ENCODE measurements at regions of chr18 and their contacts with region 1.

Region 1: DNA sequence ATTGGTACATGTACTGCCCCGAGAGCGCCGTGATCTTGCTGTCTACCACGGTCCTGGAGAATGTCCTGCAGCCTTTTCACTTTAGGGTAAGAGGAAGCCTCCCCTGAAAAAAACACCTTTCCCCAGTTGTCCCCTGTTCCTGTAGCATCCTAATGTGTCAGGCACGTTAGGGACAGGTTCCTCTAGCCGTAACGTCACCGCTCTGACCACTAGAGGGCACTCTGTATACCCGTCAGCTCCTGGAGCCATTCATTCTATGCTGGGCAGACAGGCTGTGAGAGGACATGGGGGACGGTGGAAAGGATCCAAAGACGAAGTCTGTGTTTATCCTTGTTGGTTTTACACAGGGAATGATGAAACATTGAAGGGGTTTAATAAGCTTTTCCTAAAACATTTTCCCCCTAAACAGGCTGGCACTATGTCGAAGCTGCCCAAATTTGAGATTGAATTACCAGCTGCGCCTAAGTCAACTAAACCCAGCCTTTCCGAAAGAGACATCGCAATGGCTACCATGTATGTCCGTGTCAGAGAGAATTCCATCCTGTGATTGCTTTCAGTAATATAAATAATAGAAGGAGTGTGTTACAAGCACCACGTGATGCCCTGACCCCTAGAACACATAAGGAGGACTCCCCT is 12.7 kb downstream of the RMC1 start:
- DNase-seq: peak; percentile 46
- H3K4me3 ChIP-seq: no peak overlapping the region
- H3K27ac ChIP-seq: no peak overlapping the region
- H3K27me3 ChIP-seq: no peaks in the 10 kb centered on the region
- CTCF ChIP-seq: peak; percentile 93

Region 2: GRCh38 chr18:23424616-23425015 is 91.4 kb before region 1 on chr18:
- CTCF ChIA-PET with region 1: no interaction called
- POLR2A ChIA-PET with region 1: no interaction called
- DNase-seq: no peak
- H3K4me3 ChIP-seq: no peak overlapping the region
- H3K27ac ChIP-seq: no peak overlapping the region
- H3K27me3 ChIP-seq: no peaks in the 10 kb centered on the region
- CTCF ChIP-seq: no peak

Region 3: GRCh38 chr18:23504720-23505119 is 11.3 kb before region 1 on chr18:
- CTCF ChIA-PET with region 1: interaction called, 18 read pairs
- POLR2A ChIA-PET with region 1: interaction called, 4 read pairs
- DNase-seq: no peak
- H3K4me3 ChIP-seq: peak overlapping the region; percentile 83; the same call in 1 of the 2 replicates
- H3K27ac ChIP-seq: no peak overlapping the region
- H3K27me3 ChIP-seq: no peaks in the 10 kb centered on the region
- CTCF ChIP-seq: no peak

Region 4: DNA sequence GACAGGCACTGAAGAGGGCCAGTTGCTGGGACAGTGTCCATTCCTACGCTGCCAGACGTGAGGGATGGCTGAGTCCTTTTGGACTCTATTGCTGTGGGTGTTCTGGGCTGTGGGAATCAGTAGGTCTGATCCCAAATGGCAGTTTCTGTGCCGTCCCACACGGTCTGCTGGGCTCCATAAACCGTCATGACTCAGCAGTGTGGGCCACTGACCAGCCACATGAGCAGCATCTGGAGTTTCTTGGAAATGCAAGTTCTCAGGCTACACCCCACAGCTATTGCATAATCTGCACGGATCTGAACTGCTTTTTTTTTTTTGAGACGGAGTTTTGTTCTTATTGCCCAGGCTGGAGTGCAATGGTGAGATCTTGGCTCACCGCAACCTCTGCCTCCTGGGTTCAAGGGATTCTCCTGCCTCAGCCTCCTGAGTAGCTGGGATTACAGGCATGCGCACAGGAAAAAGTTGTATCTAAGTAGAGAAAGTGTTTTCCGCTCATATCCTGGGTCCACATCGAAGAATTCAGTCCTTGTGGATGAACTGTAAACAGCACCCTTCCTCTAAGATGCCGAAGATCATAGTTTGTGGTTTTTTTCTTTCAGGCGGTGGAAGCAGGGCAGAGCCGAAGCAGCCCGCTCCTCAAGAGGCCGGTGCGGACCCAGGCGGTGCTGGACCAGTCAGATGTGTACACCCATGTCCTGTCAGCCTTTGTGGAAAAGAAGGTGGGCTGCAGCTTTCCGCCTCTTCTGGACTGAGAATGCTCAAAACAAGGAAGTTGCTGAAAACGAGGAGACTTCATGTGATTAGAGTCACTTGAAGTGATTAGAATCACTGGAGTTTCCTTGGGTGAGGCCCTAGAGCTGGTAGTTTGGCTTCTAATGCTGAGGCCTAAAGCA is 12.8 kb after region 1 on chr18:
- CTCF ChIA-PET with region 1: interaction called, 28 read pairs
- POLR2A ChIA-PET with region 1: interaction called, 3 read pairs
- DNase-seq: no peak
- H3K4me3 ChIP-seq: no peak overlapping the region
- H3K27ac ChIP-seq: no peak overlapping the region
- H3K27me3 ChIP-seq: no peaks in the 10 kb centered on the region
- CTCF ChIP-seq: no peak

Region 5: DNA sequence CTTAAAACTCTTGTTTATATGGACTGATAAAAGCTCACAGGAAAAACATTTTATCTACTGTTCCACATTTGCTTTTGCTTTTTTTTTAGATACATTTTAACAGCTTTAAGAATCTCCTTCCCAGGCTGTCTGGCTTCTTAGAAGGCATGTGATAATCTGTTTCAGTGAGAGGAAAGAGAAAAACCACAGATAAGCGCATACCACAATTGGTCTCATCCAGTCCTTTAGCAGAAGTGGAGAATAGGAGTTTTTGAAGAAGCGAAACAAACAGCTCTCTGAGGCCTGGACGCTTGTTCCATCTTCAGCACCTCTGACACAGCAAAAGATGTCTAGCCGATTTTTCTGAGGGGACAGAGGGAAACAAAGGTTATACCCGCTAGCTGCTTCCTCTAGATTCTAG is 24.8 kb after region 1 on chr18:
- CTCF ChIA-PET with region 1: interaction called, 10 read pairs
- POLR2A ChIA-PET with region 1: no interaction called
- DNase-seq: no peak
- H3K4me3 ChIP-seq: no peak overlapping the region
- H3K27ac ChIP-seq: no peak overlapping the region
- H3K27me3 ChIP-seq: no peaks in the 10 kb centered on the region
- CTCF ChIP-seq: no peak

Region 6: DNA sequence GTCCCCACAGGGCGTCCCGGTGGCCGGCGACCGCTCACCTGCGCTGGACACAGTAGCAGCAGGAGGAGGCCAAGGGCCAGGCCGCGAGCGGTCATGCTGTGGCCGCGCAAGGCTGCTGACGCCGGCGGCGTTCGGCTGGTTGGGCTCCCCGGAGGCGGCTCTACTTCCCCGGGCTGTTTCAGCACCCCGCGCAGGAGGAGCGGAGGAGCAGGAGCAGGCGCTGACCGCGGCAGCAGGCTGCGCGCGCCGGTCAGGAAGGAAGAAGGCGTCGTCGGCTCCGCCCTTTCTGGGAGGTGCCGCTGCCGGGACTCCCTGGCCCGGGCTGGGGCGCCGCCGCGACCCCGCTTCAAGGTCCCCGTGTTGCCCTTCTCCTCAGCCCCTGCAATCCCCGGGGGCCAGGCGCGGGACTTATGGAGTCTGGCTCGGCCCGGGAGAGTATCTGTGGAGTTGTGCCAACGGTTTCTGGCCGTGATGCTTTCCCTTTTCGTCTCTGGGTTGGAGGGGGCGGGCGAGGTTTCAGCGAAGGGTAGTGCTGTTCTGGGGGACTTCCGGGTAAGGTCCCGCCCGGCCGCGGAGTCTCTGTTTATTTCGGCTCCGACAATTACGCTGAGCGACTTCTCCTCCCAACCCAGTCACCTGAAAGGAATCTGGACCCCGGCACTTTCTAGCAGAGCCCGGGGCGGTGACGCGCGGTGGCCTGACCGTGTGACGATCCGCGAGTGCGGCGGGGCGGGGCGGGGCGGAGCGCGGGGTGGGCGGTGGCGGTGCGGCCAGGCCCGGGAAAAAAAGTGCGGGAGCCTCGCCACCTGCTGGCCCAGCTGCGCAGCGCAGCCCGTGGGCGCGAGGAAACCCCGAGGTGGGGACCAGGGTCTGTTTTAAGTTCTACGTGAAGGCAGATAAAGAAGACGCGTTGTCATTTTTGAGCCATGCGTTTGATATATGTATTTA is 70.5 kb after region 1 on chr18 and contains the start of gene NPC1:
- CTCF ChIA-PET with region 1: interaction called, 13 read pairs
- POLR2A ChIA-PET with region 1: no interaction called
- DNase-seq: peak; percentile 81
- H3K4me3 ChIP-seq: peak within 1 kb of the TSS; percentile 90
- H3K27ac ChIP-seq: peak within 1 kb of the TSS; percentile 98
- H3K27me3 ChIP-seq: peaks cover 15% of the 10 kb centered on the region
- CTCF ChIP-seq: peak; percentile 83
- polyA plus RNA-seq, gene NPC1: 10.8 and 11.3 TPM in 2 replicates

Region 7: DNA sequence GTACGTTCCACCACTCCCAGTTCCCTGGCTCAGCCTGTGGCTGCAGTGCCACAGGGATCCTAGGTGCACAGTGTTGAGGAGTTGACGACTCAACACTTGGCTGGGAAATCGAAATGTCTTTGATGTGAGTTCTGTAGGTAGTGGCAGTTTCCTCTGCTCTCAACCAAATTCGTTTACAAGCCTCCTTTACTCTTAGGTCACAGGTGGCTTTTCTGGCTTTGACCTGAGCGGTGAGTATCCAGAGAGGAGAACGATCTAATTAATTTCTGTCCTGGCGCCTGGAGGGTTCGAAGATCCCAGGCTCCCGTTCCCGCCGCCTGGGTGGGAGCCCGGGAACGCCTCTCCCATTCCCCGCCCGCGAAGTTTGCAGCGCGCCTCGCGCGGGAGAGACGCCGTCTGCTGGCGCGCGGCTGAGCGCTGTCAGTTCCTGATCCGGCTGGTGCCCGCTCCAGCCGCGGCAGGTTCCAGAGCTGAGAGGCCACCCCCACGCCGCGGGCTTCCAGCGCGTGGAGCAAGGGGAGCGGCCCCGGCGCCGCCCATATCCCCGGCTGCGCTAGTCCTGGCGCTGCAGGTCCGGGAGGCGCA is 173.1 kb after region 1 on chr18 and contains the start of gene LAMA3:
- CTCF ChIA-PET with region 1: no interaction called
- POLR2A ChIA-PET with region 1: no interaction called
- DNase-seq: no peak
- H3K4me3 ChIP-seq: peak within 1 kb of the TSS; percentile 45
- H3K27ac ChIP-seq: no peak within 1 kb of the TSS
- H3K27me3 ChIP-seq: peaks cover 44% of the 10 kb centered on the region
- CTCF ChIP-seq: peak; percentile 26; the same call in 1 of the 2 replicates
- polyA plus RNA-seq, gene LAMA3: 0.20 and 0.32 TPM in 2 replicates